Head of caudate nucleus (tissue), 42 donors: ENCODE measurements at regions of chr1 and their contacts with region 1.

Region 1: DNA sequence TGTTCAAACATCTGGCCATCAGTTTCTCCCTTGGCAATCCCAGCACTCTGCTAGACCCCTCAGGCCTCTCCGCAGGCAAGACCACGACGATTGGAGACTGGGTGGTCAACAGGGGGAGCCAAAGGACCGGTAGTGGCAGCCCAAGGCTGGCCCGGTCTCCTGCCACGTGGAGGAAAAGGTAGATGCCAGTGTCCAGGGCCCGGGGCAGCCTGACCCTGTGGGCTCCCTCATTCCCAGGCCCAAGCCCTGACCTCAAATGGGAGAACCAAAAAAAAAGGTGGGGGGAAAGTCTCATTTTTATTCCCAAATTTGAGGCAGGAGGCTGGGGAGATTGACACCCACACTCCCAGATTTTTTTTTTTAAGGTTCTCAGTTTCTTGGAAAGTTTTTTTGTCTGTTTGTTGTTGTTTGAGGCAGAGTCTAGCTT is 24.8 kb downstream of the S100A6 start:
- DNase-seq: peak; percentile 57 to 90 (median 78)

Region 2: GRCh38 chr1:153390938-153391710 is 119.9 kb before region 1 on chr1 and contains the start of gene S100A8:
- intact Hi-C with region 1: no loop called
- DNase-seq: peak in 33 of 42 donors; percentile 17 to 75 (median 37)

Region 3: GRCh38 chr1:153532769-153533599 is 22.0 kb after region 1 on chr1:
- intact Hi-C with region 1: no loop called
- DNase-seq: peak; percentile 61 to 91 (median 81)

Region 4: DNA sequence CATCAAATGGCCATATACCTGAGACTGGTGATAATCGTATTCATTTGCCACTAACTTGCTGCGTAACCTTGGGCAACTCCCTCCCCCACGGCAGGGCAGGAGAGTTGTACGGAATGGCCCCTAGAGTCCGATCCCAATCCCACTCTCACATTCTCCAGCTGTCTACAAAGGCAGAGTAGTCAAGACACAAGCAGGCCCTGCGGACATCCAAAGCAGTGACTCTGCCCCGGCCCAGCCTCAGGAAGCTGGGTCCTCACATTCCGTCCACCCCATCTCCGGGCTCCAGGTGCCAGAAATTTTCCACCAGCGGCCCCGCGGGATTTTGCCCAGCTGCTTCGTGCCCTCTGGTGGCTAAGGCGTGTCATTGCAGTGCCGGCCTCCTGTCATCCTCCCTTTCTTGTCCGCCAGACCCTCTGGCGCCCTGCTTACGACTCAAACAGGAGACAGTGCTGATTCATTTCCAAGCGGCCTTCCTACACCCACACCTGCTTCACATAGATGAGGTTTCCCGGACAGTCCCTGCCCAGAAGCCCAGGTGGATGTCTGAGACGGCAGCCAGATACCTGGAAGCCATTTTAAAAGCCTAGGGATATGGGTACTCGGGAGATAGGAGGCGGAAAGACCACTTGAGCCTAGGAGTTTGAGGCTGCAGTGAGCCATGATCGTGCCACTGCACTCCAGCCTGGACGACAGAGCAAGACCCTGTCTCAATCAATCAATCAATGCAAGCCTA is 57.5 kb after region 1 on chr1:
- intact Hi-C with region 1: loop called (anchors 1 kb)
- DNase-seq: peak; percentile 74 to 96 (median 88)